Endothelial cell of umbilical vein (primary cell): ENCODE measurements at regions of chr2 and their contacts with region 1.

Region 1: DNA sequence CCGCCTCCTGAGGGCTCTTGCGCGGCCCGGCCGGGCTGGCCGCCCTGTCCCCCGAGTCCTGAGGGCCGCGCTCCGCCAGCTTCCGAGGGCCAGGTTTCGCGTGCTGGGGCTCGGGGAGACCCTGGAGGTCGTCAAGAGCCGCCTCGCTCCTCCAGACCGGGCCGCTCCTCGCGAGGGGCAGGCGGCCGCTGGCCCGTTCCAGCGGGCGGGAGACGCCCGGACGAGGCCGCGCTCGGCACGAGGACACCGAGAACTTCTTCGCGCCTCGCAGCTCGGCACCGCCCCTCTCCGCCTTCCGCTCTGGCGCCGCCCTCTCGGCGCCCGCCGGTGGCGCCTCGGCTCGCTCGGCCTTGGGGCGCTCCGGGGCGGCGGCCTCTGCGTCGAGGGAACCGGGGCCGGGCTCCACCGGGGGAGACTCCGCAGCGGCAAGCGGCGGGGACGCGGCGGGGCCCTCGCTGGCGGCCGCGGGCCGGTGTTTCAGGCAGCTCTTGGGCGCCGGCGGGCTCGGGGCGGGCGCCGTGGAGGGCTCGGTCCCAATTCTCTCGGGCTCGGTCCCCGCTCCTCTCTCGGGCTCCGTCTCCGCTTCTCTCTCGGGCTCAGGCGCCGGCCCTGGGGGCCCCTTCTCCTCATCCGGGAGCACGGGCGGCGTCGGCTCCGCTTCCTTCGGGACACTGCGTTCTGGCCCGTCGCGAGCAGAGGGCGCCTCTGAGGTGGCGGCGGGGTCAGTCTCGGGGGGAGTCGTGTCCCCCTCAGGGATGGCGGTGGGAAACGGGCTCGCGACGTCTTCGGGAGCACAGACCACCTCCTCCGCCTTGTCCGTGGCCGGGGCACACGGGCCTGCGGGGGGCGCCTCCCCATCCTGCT is 91.6 kb upstream of the MGAT4A start:
- DNase-seq: peak; percentile 38
- H3K4me3 ChIP-seq: peak overlapping the region in 2 of 3 experiments; percentile 44
- H3K27ac ChIP-seq: peak overlapping the region; percentile 53
- H3K4me1 ChIP-seq: peaks cover 11% of the 10 kb centered on the region
- H3K27me3 ChIP-seq: no peaks in the 10 kb centered on the region
- CTCF ChIP-seq: peak; percentile 33 to 64
- POLR2A ChIP-seq: no peak

Region 2: DNA sequence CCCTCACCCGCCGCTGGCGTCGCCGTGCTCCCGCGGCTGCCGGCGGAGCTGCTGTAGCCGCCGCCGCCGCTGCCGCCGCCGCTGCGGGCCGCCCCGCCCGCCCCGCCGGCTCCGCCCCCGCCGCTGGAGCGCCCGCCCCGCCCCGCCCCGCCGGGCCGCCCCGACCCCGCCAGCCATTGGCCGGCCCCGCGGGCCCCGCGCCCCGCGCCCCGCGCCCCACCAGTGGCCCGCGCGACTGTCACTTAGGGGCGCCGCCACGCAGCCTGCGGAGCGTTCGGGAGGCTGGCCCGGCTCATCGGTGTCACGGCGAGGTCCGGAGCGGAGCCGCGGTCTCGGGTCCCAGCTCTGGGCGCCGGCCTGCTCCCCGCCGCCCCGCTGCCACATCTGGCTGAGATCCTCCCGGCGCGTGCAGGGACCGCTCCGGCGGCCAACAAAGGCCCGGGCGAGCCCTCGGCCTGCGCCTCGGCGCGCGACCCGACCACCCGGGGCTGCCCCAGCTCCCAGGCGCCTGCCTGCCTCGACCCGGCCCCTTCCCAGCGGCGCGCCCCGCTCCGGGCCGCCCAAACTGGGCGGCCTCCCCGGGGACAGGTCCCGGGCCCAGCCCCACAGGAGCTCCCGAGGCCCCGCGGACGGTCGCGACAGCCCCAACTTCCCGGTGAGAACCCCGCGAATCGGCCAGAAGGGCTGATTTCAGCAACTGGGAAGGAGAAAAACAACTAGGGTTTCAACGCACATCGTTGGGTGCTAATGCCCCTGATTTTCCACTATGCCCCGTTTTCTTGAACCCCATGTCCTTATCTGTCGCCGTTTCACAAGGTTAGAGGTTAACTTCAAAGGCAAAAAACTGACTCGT is 91.3 kb before region 1 on chr2 and contains the start of gene MGAT4A:
- CTCF ChIA-PET with region 1: interaction called, 13 read pairs
- POLR2A ChIA-PET with region 1: no interaction called
- dilution Hi-C with region 1: no loop called
- intact Hi-C with region 1: loop called (anchors 2 kb)
- DNase-seq: peak; percentile 52
- H3K4me3 ChIP-seq: peak within 1 kb of the TSS; percentile 64 to 97 (median 77)
- H3K27ac ChIP-seq: peak within 1 kb of the TSS; percentile 60
- H3K4me1 ChIP-seq: peaks cover 48% of the 10 kb centered on the region
- H3K27me3 ChIP-seq: no peaks in the 10 kb centered on the region
- CTCF ChIP-seq: no peak
- POLR2A ChIP-seq: peak; percentile 68
- total RNA-seq, gene MGAT4A: 42.2 and 47.6 TPM in 2 replicates

Region 3: GRCh38 chr2:98795891-98796676 is 26.4 kb before region 1 on chr2:
- CTCF ChIA-PET with region 1: interaction called, 5 read pairs
- POLR2A ChIA-PET with region 1: no interaction called
- dilution Hi-C with region 1: no loop called
- intact Hi-C with region 1: loop called (anchors 1 kb)
- DNase-seq: peak; percentile 49
- H3K4me3 ChIP-seq: no peak overlapping the region
- H3K27ac ChIP-seq: no peak overlapping the region
- H3K4me1 ChIP-seq: peaks cover 43% of the 10 kb centered on the region
- H3K27me3 ChIP-seq: no peaks in the 10 kb centered on the region
- CTCF ChIP-seq: peak in 1 of 2 donors; percentile 6
- POLR2A ChIP-seq: no peak

Region 4: DNA sequence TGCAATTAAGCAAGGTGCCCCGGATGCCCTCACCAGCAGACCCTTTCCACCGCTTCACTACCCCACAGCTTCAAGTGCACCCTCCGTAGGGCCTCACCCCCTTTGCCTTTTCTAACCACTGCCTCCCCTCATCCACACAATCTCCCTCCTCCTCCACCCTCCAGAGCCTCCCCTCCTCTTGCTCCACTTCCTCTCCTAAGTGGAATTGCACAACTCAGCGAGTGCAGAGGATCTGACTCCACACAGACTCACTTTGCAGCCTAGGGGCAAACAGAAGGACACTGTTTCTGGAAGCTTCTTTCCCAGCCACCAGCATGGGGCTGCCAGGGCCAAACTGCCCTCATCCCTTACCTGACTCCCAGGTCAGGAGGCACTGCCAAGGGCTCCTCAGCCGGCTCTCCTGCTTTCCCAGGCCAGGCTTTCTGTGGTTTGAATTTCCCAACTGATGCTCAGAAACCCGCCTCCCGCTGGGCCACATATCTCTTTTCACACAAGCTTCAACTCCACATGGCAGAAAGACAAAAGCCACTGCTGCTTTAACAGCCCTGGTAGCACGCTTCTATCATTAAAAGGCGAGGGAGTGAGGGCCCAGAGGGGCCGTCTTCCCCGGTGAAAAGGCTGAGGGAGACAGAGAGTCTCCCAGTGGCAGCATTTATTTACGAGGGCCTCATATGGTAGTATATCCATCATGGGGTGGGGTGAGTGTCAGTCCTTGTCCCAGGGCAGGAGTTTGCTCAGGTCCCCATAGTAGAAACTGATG is 16.9 kb before region 1 on chr2:
- CTCF ChIA-PET with region 1: interaction called, 10 read pairs
- POLR2A ChIA-PET with region 1: interaction called, 3 read pairs
- dilution Hi-C with region 1: no loop called
- intact Hi-C with region 1: no loop called
- DNase-seq: no peak
- H3K4me3 ChIP-seq: no peak overlapping the region
- H3K27ac ChIP-seq: no peak overlapping the region
- H3K4me1 ChIP-seq: peaks cover 25% of the 10 kb centered on the region
- H3K27me3 ChIP-seq: no peaks in the 10 kb centered on the region
- CTCF ChIP-seq: no peak
- POLR2A ChIP-seq: no peak

Region 5: GRCh38 chr2:99032786-99033185 is 210.3 kb after region 1 on chr2:
- CTCF ChIA-PET with region 1: no interaction called
- POLR2A ChIA-PET with region 1: no interaction called
- dilution Hi-C with region 1: no loop called
- intact Hi-C with region 1: no loop called
- DNase-seq: no peak
- H3K4me3 ChIP-seq: no peak overlapping the region
- H3K27ac ChIP-seq: no peak overlapping the region
- H3K4me1 ChIP-seq: no peaks in the 10 kb centered on the region
- H3K27me3 ChIP-seq: peaks cover 2% of the 10 kb centered on the region in 2 experiments
- CTCF ChIP-seq: no peak
- POLR2A ChIP-seq: no peak